Astrocyte of the cerebellum (primary cell): ENCODE measurements at regions of chr12 and their contacts with region 1.

Region 1: GRCh38 chr12:120216742-120217605 is 16.1 kb upstream of the RPLP0 start:
- DNase-seq: no peak
- H3K4me3 ChIP-seq: no peak overlapping the region
- CTCF ChIP-seq: no peak

Region 2: DNA sequence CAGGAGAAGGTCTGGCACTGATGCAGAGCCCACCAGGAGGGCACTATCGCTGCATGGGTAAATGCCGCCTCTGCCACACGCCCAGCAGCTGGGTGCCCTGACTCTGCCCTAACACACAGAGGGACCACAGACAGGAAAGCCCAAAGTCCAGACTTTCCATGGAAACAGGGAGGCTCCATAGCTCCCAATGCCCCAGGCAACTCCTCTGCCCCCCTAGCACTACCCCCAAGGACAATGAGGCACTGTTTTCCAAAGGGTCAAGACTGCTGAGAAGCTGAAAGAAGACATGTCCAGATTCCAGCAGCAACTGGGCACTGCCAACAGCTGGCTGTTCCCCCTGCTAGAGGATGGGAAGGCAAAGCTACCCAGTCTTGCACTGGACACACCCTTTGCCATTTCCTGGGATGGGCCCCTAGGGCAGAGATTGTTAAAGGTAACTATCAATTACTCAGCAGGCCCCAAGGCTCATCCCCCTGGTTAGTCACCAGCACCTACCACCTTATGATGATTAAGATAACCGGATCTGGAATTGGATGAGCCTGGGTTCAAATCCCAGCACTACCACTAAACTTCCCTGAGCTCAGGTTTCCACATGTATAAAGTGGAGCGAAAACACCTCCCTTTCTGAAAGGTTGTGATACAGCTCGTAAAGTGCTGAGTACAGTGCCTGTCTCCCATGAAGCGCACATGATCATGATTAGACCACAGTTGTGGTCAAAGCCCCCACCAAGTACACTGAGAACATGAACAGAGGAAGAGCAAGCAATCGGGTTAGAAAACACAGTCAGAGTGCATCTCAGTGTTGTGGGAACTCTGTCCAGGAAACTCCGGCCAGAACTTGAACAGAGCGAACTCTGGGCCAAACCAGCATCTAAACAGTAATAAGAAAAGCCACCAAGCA is 45.2 kb after region 1 on chr12:
- in situ Hi-C with region 1: loop called (anchors 5 kb)
- DNase-seq: peak; percentile 31
- H3K4me3 ChIP-seq: peak overlapping the region; percentile 87
- CTCF ChIP-seq: no peak

Region 3: GRCh38 chr12:120276734-120277133 is 59.8 kb after region 1 on chr12:
- in situ Hi-C with region 1: no loop called
- DNase-seq: no peak
- H3K4me3 ChIP-seq: no peak overlapping the region
- CTCF ChIP-seq: no peak